HepG2 (cell line): ENCODE measurements at regions of chr14 and their contacts with region 1.

Region 1: DNA sequence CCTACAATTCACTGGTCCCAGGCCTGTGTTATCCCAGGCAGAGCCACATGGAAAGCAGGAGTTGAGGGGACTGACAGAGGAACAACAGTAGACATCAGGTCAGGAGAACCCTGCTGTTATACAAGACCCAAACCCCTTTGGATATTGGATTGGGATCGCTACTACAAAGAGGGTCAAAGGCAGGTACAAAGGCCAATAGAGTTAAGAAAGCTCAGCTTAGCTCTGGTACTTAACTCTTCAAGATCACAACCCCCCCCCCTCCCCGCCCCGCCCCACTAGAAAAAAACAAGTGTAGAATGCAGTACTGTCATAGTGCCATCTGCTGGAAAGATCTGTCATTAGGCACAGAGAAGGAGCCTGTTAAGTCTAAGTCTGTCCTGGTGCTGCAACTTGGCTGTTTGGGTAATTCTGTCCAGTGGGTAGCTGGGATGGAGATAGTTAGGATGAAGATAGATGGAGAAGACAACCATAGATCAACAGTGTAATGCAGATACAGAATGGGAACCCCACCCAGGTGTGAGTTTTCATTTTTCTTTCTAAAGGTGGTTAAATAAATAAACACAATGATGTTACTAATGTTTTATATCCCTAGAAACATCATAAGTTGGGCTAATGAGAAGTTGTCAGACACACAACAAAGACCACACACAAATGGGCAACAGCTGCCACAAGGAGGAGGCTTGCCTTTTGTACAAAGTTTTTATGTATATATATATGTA is 17.2 kb downstream of the REM2 start:
- DNase-seq: peak; percentile 83
- ATAC-seq: peak; percentile 39
- H3K4me3 ChIP-seq: no peak overlapping the region
- H3K27ac ChIP-seq: no peak overlapping the region
- H3K4me1 ChIP-seq: peaks cover 45% of the 10 kb centered on the region
- H3K27me3 ChIP-seq: peaks cover 4 to 6% of the 10 kb centered on the region in 2 experiments; a peak in 2 of 5 replicates
- CTCF ChIP-seq: peak; percentile 87
- EP300 ChIP-seq: no peak
- POLR2A ChIP-seq: no peak
- RAD21 ChIP-seq: peak; percentile 56; the same call in 1 of the 2 replicates

Region 2: DNA sequence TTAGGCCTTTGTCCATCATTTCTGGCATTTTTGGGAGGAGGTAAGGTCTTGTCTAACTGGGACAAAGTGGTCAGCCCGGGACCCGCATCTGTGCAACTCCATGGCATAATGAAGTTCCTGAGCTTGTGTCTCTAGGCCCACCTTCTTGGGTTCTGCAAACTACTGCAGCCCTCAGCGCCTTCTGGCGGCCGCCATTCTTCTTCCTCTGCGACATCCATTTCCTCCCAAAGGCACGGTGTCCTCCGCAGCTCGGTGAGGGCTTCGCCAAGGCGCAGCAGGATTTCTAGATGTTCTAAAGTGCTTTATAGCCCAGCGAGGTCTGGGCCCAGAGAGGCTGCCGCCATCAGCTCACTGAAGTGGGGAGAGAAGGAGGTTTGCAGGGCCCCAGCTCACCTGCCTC is 1092.3 kb before region 1 on chr14:
- CTCF ChIA-PET with region 1: no interaction called
- POLR2A ChIA-PET with region 1: no interaction called
- in situ Hi-C with region 1: no loop called
- intact Hi-C with region 1: no loop called
- DNase-seq: no peak
- ATAC-seq: no peak; the same call in 2 of the 3 replicates
- H3K4me3 ChIP-seq: no peak overlapping the region
- H3K27ac ChIP-seq: no peak overlapping the region
- H3K4me1 ChIP-seq: no peaks in the 10 kb centered on the region
- H3K27me3 ChIP-seq: no peaks in the 10 kb centered on the region
- CTCF ChIP-seq: peak; percentile 19; the same call in 1 of the 2 replicates
- EP300 ChIP-seq: no peak
- POLR2A ChIP-seq: no peak
- RAD21 ChIP-seq: no peak

Region 3: DNA sequence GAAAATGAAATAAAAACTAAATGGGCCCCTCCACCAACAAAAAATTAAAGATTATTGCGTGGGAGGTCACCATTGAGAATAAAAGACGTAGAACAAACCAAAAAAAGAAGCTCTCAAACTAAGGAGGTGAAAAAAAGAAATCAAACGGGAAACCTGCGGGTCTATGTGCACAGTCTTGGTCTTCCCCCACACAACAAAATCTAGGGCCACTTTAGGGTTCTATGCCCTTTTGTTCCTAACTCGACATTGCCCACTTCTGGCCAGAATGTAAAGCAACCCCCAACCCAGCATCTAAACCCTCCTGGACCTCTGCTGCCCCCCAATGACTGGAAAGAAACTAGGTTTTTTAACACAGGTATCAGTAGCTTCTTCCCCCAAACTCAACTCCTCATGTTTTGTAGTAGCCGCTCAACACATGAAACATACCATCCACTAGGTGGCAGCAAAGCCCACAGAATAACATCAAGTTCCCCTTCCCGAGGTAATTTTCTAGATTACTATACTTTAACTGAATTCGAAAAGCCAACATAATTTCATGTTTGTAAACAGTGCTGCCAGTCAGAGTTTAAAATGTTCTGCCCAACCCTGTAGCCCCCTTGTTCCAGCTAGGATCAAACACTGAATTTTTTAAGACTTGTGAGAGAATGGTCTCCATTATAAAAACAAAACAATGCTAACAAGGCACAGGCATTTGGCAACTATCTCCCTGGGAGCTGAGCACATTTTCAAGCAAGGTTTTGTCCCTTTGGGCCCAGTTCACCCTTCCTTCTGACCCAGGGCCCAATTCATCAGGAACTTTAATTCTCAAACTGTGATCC is 329.9 kb before region 1 on chr14:
- CTCF ChIA-PET with region 1: interaction called, 4 read pairs
- POLR2A ChIA-PET with region 1: no interaction called
- in situ Hi-C with region 1: no loop called
- intact Hi-C with region 1: loop called (anchors 1 kb)
- DNase-seq: peak; percentile 98
- ATAC-seq: peak; percentile 86
- H3K4me3 ChIP-seq: no peak overlapping the region
- H3K27ac ChIP-seq: peak overlapping the region; percentile 12
- H3K4me1 ChIP-seq: peaks cover 29% of the 10 kb centered on the region
- H3K27me3 ChIP-seq: no peaks in the 10 kb centered on the region
- CTCF ChIP-seq: peak; percentile 97
- EP300 ChIP-seq: no peak; a peak in 1 of 4 replicates
- POLR2A ChIP-seq: no peak
- RAD21 ChIP-seq: peak; percentile 96

Region 4: GRCh38 chr14:22822571-22823098 is 77.6 kb before region 1 on chr14:
- CTCF ChIA-PET with region 1: interaction called, 20 read pairs
- POLR2A ChIA-PET with region 1: no interaction called
- in situ Hi-C with region 1: loop called (anchors 5 kb)
- intact Hi-C with region 1: loop called (anchors 1 kb)
- DNase-seq: peak; percentile 78
- ATAC-seq: peak; percentile 70
- H3K4me3 ChIP-seq: peak overlapping the region; percentile 12 to 53 (median 27); a peak in 5 of 6 replicates
- H3K27ac ChIP-seq: no peak overlapping the region
- H3K4me1 ChIP-seq: peaks cover 67% of the 10 kb centered on the region
- H3K27me3 ChIP-seq: 0 out of 5 replicates have a peak, but pooled peaks cover 0 to 3% of the 10 kb centered on the region in 2 experiments
- CTCF ChIP-seq: peak; percentile 93
- EP300 ChIP-seq: 0 out of 4 replicates have a peak, but pooled peaks of 1 of the 2 experiments have one; percentile 19
- POLR2A ChIP-seq: no peak
- RAD21 ChIP-seq: peak; percentile 97

Region 5: GRCh38 chr14:22872033-22872832 is 28.0 kb before region 1 on chr14:
- CTCF ChIA-PET with region 1: interaction called, 46 read pairs
- POLR2A ChIA-PET with region 1: interaction called, 28 read pairs
- in situ Hi-C with region 1: no loop called
- intact Hi-C with region 1: loop called (anchors 1 kb)
- DNase-seq: peak; percentile 84
- ATAC-seq: peak; percentile 62
- H3K4me3 ChIP-seq: peak overlapping the region; percentile 66 to 93 (median 82)
- H3K27ac ChIP-seq: peak overlapping the region; percentile 85
- H3K4me1 ChIP-seq: peaks cover 35% of the 10 kb centered on the region
- H3K27me3 ChIP-seq: no peaks in the 10 kb centered on the region; a peak in 1 of 5 replicates
- CTCF ChIP-seq: peak; percentile 99
- EP300 ChIP-seq: peak in 1 of 2 experiments; percentile 54; a peak in 2 of 4 replicates
- POLR2A ChIP-seq: no peak
- RAD21 ChIP-seq: peak; percentile 68

Region 6: GRCh38 chr14:22918804-22919600 is 18.8 kb after region 1 on chr14 and contains the start of gene RBM23:
- CTCF ChIA-PET with region 1: no interaction called
- POLR2A ChIA-PET with region 1: interaction called, 40 read pairs
- in situ Hi-C with region 1: no loop called
- intact Hi-C with region 1: no loop called
- DNase-seq: peak; percentile 36
- ATAC-seq: no peak
- H3K4me3 ChIP-seq: no peak within 1 kb of the TSS
- H3K27ac ChIP-seq: no peak within 1 kb of the TSS
- H3K4me1 ChIP-seq: peaks cover 33% of the 10 kb centered on the region
- H3K27me3 ChIP-seq: no peaks in the 10 kb centered on the region
- CTCF ChIP-seq: no peak
- EP300 ChIP-seq: no peak
- POLR2A ChIP-seq: no peak
- RAD21 ChIP-seq: no peak
- total RNA-seq, gene RBM23: 0.52 and 1.5 TPM in 2 replicates

Region 7: GRCh38 chr14:22939684-22940083 is 39.4 kb after region 1 on chr14:
- CTCF ChIA-PET with region 1: no interaction called
- POLR2A ChIA-PET with region 1: no interaction called
- in situ Hi-C with region 1: no loop called
- intact Hi-C with region 1: no loop called
- DNase-seq: no peak
- ATAC-seq: no peak
- H3K4me3 ChIP-seq: no peak overlapping the region
- H3K27ac ChIP-seq: no peak overlapping the region
- H3K4me1 ChIP-seq: no peaks in the 10 kb centered on the region
- H3K27me3 ChIP-seq: no peaks in the 10 kb centered on the region
- CTCF ChIP-seq: no peak
- EP300 ChIP-seq: no peak
- POLR2A ChIP-seq: no peak
- RAD21 ChIP-seq: no peak